Ovary (tissue), 10 donors: ENCODE measurements at regions of chr4 and their contacts with region 1.

Region 1: DNA sequence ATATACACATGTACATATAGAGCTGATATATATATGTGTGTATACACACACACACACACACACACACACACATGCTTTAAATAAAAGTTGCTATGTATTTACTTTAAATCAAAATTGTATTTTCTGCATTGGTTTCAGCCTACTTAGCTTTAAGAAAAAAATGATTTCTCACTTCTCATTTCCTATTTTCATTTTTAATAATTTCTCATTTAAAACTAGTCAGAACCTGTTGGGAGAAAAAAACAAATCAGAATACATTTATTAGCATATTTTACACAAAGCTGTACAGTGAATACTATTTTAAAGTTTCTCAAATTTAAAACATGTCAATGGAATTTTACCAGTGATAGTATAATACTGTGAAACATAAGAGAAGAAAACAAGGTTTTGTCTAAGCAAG is 681.8 kb downstream of the CENPC start:
- DNase-seq: no peak
- H3K4me3 ChIP-seq: no peak overlapping the region
- H3K27ac ChIP-seq: no peak overlapping the region
- H3K4me1 ChIP-seq: no peaks in the 10 kb centered on the region
- H3K27me3 ChIP-seq: no peaks in the 10 kb centered on the region
- CTCF ChIP-seq: no peak
- EP300 ChIP-seq: no peak
- POLR2A ChIP-seq: no peak

Region 2: DNA sequence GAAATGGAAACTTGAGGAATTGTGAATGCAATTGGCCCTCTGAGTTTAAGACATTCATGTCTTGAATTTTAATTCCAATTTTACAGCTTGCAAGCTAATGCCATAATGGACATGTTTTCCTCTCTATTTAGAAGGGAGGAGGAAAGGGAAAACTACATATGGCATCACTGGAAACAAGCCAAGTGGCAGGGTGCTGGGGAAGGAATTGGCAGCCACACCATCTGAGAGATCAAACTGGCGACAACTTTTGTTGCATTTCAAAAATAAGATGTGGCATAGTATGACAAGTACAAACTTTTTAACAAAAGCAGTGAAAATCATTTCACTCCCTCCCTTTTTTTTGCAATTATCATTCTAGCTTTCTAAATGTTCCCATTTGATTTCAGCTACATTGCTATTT is 66.3 kb after region 1 on chr4:
- intact Hi-C with region 1: loop called in 1 of 4 experiments (anchors 10 kb)
- DNase-seq: no peak
- H3K4me3 ChIP-seq: no peak overlapping the region
- H3K27ac ChIP-seq: no peak overlapping the region
- H3K4me1 ChIP-seq: no peaks in the 10 kb centered on the region
- H3K27me3 ChIP-seq: no peaks in the 10 kb centered on the region
- CTCF ChIP-seq: no peak
- EP300 ChIP-seq: no peak
- POLR2A ChIP-seq: no peak